Upper lobe of right lung (tissue), 1 donor: ENCODE measurements at regions of chr6 and their contacts with region 1.

Region 1: DNA sequence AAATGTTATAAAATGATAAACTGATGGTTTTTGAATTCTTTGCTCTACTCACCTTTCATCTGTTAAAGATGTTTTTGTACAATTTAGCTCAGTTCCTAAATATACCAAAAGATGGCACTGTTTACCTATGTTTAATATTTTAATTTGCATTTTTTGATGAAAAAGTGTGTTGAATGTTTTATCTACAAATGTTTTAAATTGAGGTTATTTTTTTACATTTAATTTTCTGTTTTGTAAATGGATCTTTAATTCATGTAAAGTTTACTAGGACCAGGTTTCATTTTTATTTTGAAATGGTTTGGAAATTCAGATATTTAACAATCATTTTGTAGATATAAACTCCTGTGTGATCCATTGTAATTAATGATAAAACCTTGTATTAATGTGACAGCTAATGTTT is 30.0 kb downstream of the CDKAL1 start:
- DNase-seq: no peak
- ATAC-seq: no peak
- H3K4me3 ChIP-seq: no peak overlapping the region
- H3K27ac ChIP-seq: no peak overlapping the region
- H3K4me1 ChIP-seq: no peaks in the 10 kb centered on the region
- H3K27me3 ChIP-seq: no peaks in the 10 kb centered on the region
- CTCF ChIP-seq: peak; percentile 74

Region 2: GRCh38 chr6:21589352-21590345 is 1025.4 kb after region 1 on chr6:
- intact Hi-C with region 1: loop called (anchors 10 kb)
- DNase-seq: peak; percentile 94
- ATAC-seq: peak; percentile 79
- H3K4me3 ChIP-seq: peak overlapping the region; percentile 70
- H3K27ac ChIP-seq: peak overlapping the region; percentile 82
- H3K4me1 ChIP-seq: peaks cover 7% of the 10 kb centered on the region
- H3K27me3 ChIP-seq: no peaks in the 10 kb centered on the region
- CTCF ChIP-seq: peak; percentile 93